GM12878 (cell line): ENCODE measurements at regions of chr12 and their contacts with region 1.

Region 1: DNA sequence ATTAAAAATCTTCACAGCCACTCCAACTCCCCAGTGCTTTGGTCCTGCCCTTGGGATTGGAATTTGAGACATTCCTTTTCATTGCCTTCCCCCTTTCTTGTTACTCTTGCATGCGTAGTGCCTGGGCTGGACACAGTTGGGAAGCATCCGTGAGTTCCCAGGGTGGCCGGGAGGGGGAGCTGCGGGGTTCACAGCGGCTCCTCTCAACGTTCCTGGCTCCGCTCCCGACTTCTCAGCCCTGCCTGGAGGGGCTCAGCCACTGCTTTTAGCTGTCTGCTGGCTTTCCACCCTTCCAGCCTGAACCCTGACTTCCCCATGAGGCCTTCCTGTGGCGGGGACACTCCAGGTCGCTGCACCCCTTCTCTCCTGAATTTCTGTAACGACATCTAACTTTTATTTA is 3.2 kb downstream of the TEX52 start:
- DNase-seq: no peak
- ATAC-seq: peak; percentile 90
- H3K4me3 ChIP-seq: no peak overlapping the region
- H3K27ac ChIP-seq: no peak overlapping the region
- H3K4me1 ChIP-seq: no peaks in the 10 kb centered on the region
- H3K27me3 ChIP-seq: no peaks in the 10 kb centered on the region
- CTCF ChIP-seq: peak; percentile 54 to 85 (median 68)
- EP300 ChIP-seq: no peak
- POLR2A ChIP-seq: no peak
- RAD21 ChIP-seq: peak; percentile 43

Region 2: GRCh38 chr12:3041558-3042164 is 188.0 kb after region 1 on chr12:
- CTCF ChIA-PET with region 1: interaction called, 5 read pairs
- POLR2A ChIA-PET with region 1: no interaction called
- RAD21 ChIA-PET with region 1: interaction called, 6 read pairs
- SMC1A ChIA-PET with region 1: no interaction called
- in situ Hi-C with region 1: no loop called
- intact Hi-C with region 1: loop called (anchors 1 kb)
- DNase-seq: peak; percentile 15
- ATAC-seq: peak; percentile 98
- H3K4me3 ChIP-seq: no peak overlapping the region
- H3K27ac ChIP-seq: no peak overlapping the region
- H3K4me1 ChIP-seq: no peaks in the 10 kb centered on the region
- H3K27me3 ChIP-seq: peaks cover 0 to 2% of the 10 kb centered on the region in 2 experiments; a peak in 1 of 4 replicates
- CTCF ChIP-seq: peak; percentile 59 to 75 (median 65)
- EP300 ChIP-seq: no peak
- POLR2A ChIP-seq: no peak
- RAD21 ChIP-seq: peak; percentile 77